ENCODE measurements at regions of chr19 and their contacts with region 1.

Region 1: GRCh38 chr19:21482863-21483276 is 22.5 kb upstream of the ZNF429 start:
- DNase-seq: peak; percentile 12 to 73 (median 61)
- ATAC-seq: peak; percentile 89
- H3K4me3 ChIP-seq: no peak overlapping the region
- H3K4me3 Mint-ChIP-seq: peak overlapping the region in 1 of 10 donors; percentile 46
- H3K27ac ChIP-seq: no peak overlapping the region
- H3K27ac Mint-ChIP-seq: no peak overlapping the region
- H3K4me1 ChIP-seq: no peaks in the 10 kb centered on the region
- H3K4me1 Mint-ChIP-seq: peaks cover 0 to 5% (median 0%) of the 10 kb centered on the region in 7 donors
- H3K27me3 ChIP-seq: no peaks in the 10 kb centered on the region
- H3K27me3 Mint-ChIP-seq: no peaks in the 10 kb centered on the region

Region 2: GRCh38 chr19:21202865-21203494 is 279.9 kb before region 1 on chr19:
- CTCF ChIA-PET with region 1: interaction called, 5 read pairs
- POLR2A ChIA-PET with region 1: no interaction called
- intact Hi-C with region 1: loop called (anchors 1 to 2 kb)
- DNase-seq: peak in 6 of 9 donors; percentile 13 to 52 (median 36)
- ATAC-seq: peak; percentile 73
- H3K4me3 ChIP-seq: no peak overlapping the region
- H3K4me3 Mint-ChIP-seq: no peak overlapping the region
- H3K27ac ChIP-seq: no peak overlapping the region
- H3K27ac Mint-ChIP-seq: no peak overlapping the region
- H3K4me1 ChIP-seq: no peaks in the 10 kb centered on the region
- H3K4me1 Mint-ChIP-seq: no peaks in the 10 kb centered on the region
- H3K27me3 ChIP-seq: no peaks in the 10 kb centered on the region
- H3K27me3 Mint-ChIP-seq: peaks cover 0 to 18% (median 13%) of the 10 kb centered on the region in 5 donors

Region 3: GRCh38 chr19:21383980-21384582 is 98.8 kb before region 1 on chr19:
- CTCF ChIA-PET with region 1: no interaction called
- POLR2A ChIA-PET with region 1: no interaction called
- intact Hi-C with region 1: no loop called
- DNase-seq: no peak
- ATAC-seq: no peak
- H3K4me3 ChIP-seq: no peak overlapping the region
- H3K4me3 Mint-ChIP-seq: no peak overlapping the region
- H3K27ac ChIP-seq: no peak overlapping the region
- H3K27ac Mint-ChIP-seq: no peak overlapping the region
- H3K4me1 ChIP-seq: no peaks in the 10 kb centered on the region
- H3K4me1 Mint-ChIP-seq: no peaks in the 10 kb centered on the region
- H3K27me3 ChIP-seq: no peaks in the 10 kb centered on the region
- H3K27me3 Mint-ChIP-seq: no peaks in the 10 kb centered on the region

Region 4: DNA sequence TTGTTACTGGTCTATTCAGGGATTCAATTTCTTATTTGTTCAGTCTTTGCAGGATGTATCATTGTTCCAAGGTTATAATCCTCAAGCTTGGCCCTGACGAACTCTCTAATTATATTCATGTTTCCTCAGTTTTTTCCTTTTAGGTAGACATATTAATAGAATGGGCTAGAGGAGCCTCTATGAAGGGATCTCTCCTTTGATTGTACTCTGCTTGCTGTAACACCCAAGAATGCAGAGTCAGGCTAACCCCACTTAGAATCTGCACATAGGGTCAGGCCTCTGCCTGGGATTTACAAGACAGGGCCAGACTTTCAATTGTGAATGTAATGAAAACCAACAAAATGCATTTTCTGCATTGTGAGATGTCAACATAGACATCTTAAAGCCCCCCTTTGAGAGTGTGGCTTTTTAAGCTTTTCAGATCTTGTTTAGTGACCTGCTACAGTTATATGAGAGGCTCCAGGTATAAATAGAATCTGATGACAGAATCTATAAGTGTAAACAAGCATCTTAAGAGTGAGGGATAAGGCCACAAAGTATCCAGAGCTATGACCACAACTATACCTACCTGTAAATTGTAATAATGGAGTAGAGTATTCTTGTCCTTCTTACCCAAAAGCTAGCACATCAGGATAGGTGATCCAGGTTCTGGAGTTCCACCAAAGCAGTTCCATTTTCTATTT is 80.4 kb before region 1 on chr19:
- CTCF ChIA-PET with region 1: no interaction called
- POLR2A ChIA-PET with region 1: no interaction called
- intact Hi-C with region 1: no loop called
- DNase-seq: no peak
- ATAC-seq: no peak
- H3K4me3 ChIP-seq: no peak overlapping the region
- H3K4me3 Mint-ChIP-seq: no peak overlapping the region
- H3K27ac ChIP-seq: no peak overlapping the region
- H3K27ac Mint-ChIP-seq: peak overlapping the region in 1 of 9 donors; percentile 4
- H3K4me1 ChIP-seq: peaks cover 6% of the 10 kb centered on the region in 2 donors
- H3K4me1 Mint-ChIP-seq: peaks cover 12 to 55% (median 39%) of the 10 kb centered on the region in 7 donors
- H3K27me3 ChIP-seq: no peaks in the 10 kb centered on the region
- H3K27me3 Mint-ChIP-seq: no peaks in the 10 kb centered on the region

Region 5: GRCh38 chr19:21677696-21678418 is 195.0 kb after region 1 on chr19:
- CTCF ChIA-PET with region 1: interaction called, 5 read pairs
- POLR2A ChIA-PET with region 1: no interaction called
- intact Hi-C with region 1: loop called in 1 of 2 experiments (anchors 1 kb)
- DNase-seq: peak in 2 of 9 donors; percentile 4 to 8
- ATAC-seq: peak; percentile 57
- H3K4me3 ChIP-seq: peak overlapping the region; percentile 20
- H3K4me3 Mint-ChIP-seq: peak overlapping the region in 8 of 10 donors; percentile 6 to 76 (median 63)
- H3K27ac ChIP-seq: no peak overlapping the region
- H3K27ac Mint-ChIP-seq: peak overlapping the region in 4 of 9 donors; percentile 16 to 70 (median 36)
- H3K4me1 ChIP-seq: no peaks in the 10 kb centered on the region
- H3K4me1 Mint-ChIP-seq: peaks cover 0 to 22% (median 0%) of the 10 kb centered on the region in 7 donors
- H3K27me3 ChIP-seq: no peaks in the 10 kb centered on the region
- H3K27me3 Mint-ChIP-seq: peaks cover 0 to 7% (median 3%) of the 10 kb centered on the region in 5 donors

Region 6: DNA sequence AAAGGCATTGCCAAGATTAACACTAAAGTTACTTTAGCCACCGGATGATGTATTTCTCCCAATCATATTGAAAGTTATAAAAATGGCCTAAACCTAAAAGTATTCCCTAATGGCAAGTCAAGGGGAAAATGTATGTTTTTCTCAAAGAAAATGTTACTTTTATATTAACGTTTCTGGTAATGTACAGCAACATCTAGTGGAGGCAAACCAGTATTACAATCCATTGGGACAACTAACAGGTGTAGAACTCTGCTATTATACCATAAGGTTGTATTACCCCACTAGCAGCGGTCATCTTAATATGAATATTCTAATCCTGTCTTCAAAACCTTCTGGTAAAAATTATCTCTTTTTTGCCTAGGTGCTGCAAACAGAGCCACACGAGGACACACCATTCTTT is 215.3 kb after region 1 on chr19:
- CTCF ChIA-PET with region 1: interaction called, 10 read pairs
- POLR2A ChIA-PET with region 1: no interaction called
- intact Hi-C with region 1: loop called in 1 of 2 experiments (anchors 1 kb)
- DNase-seq: peak in 5 of 9 donors; percentile 40 to 57 (median 45)
- ATAC-seq: peak; percentile 72
- H3K4me3 ChIP-seq: no peak overlapping the region
- H3K4me3 Mint-ChIP-seq: no peak overlapping the region
- H3K27ac ChIP-seq: no peak overlapping the region
- H3K27ac Mint-ChIP-seq: no peak overlapping the region
- H3K4me1 ChIP-seq: no peaks in the 10 kb centered on the region
- H3K4me1 Mint-ChIP-seq: no peaks in the 10 kb centered on the region
- H3K27me3 ChIP-seq: no peaks in the 10 kb centered on the region
- H3K27me3 Mint-ChIP-seq: peaks cover 0 to 4% (median 0%) of the 10 kb centered on the region in 5 donors